ENCODE measurements at regions of chr1 and their contacts with region 1.

Region 1: DNA sequence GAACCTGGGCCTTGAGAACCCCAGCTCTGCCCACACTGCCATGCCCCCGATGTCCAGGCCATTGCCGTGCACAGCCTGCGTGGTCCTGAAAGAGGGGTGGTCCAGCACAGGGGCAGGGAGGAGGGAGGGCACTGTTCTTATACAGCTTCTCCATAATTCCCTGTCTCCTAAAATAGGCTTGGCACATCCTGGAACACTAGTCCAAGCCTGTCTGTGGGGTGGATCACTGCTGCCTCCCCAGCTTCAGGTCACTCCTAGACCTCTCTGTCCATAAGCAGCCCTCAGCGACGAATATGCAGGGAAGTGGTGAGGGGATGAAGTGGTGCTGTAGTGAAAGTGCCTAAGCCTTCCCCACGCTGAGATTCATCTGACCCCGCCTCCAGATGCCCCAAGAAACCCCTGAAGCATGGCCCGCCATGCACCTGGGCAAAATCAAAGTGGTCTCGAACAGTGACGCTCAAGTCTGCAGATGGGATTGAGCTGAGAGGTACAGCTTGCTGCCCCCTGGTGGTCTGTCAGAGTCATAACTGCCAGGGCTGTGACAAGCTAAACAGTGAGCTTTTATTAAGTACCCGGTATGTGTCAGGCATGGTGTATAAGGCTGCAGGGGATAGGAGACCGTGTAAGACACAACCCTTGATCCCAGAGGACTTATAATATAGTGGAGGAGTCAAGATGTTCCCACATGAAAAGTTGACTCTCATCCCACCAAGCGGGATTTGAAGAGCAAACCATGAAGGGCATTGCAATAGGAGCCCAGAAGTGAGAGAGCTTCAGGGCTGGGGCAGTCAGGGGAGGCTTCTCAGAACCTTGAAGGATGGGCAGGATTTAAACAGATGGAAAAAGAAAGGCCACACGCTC is 66.6 kb downstream of the FAM163A start:
- DNase-seq: peak; percentile 61
- ATAC-seq: peak; percentile 83
- H3K4me3 ChIP-seq: no peak overlapping the region
- H3K27ac ChIP-seq: no peak overlapping the region
- H3K4me1 ChIP-seq: peaks cover 4% of the 10 kb centered on the region; the same call in 1 of the 2 replicates
- H3K27me3 ChIP-seq: 0 out of 2 replicates have a peak, but pooled peaks cover 2% of the 10 kb centered on the region
- CTCF ChIP-seq: peak; percentile 94

Region 2: DNA sequence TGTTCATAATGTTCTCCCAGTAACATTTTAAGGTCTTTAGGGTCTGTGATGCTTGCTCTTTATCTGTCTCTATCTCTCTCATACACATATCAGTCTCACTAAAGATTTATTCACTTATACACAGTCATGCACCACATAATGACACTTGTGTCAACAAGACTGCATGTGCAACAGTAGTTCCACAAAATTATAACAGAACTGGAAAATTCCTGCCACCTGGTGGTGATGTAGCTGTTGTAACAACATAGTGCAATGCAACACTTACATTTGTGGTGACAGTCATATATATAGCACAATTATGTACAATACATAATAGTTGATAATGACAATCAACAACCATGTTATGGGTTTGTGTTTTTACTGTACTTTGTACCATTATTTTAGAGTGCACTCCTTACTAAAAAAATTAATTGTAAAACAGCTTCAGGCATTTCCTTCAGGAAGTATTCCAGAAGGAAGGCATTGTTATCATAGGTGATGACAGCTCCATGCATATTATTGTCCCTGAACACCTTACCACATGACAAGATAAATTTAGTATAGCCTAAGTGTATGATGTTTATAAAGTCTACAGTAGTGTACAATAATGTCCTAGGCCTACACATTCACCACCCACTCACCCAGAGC is 210.0 kb before region 1 on chr1:
- CTCF ChIA-PET with region 1: interaction called, 3 read pairs
- POLR2A ChIA-PET with region 1: no interaction called
- in situ Hi-C with region 1: no loop called
- intact Hi-C with region 1: loop called (anchors 10 kb)
- DNase-seq: no peak
- ATAC-seq: peak; percentile 90
- H3K4me3 ChIP-seq: no peak overlapping the region
- H3K27ac ChIP-seq: no peak overlapping the region
- H3K4me1 ChIP-seq: no peaks in the 10 kb centered on the region
- H3K27me3 ChIP-seq: no peaks in the 10 kb centered on the region
- CTCF ChIP-seq: peak; percentile 55; the same call in 1 of the 2 replicates

Region 3: DNA sequence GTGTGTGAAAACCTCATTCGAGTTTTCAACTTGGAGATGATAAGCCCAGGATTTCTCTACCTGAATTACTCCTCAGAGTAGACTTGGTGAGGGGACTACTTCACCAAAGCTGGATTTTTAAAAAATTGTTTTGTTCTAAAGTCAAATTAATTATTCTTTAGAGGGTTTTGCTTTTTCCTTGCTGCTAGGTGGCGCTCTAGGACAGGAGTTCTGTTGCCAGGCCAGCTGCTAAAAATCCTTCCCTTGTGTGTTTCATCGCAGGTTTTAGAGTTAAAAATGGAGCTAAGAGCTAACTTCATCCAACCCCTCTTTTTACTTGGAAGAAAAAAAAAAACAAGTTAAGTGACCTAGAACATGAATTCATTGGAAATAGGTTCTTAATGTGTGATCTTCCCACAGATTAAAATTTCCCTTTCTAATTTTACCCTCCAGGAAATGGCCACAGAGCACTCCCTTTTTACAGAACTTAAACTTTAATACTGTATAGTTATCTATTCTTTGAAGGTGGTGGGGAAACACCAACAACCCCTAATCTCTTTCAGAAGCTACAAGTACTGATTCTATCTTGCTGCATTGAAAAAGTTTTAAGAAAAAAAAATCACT is 103.3 kb before region 1 on chr1:
- CTCF ChIA-PET with region 1: interaction called, 76 read pairs
- POLR2A ChIA-PET with region 1: interaction called, 9 read pairs
- in situ Hi-C with region 1: no loop called
- intact Hi-C with region 1: loop called (anchors 1 kb)
- DNase-seq: no peak
- ATAC-seq: no peak
- H3K4me3 ChIP-seq: no peak overlapping the region
- H3K27ac ChIP-seq: no peak overlapping the region
- H3K4me1 ChIP-seq: no peaks in the 10 kb centered on the region
- H3K27me3 ChIP-seq: peaks cover 9% of the 10 kb centered on the region; the same call in 1 of the 2 replicates
- CTCF ChIP-seq: peak; percentile 84

Region 4: GRCh38 chr1:179770884-179771502 is 38.7 kb before region 1 on chr1:
- CTCF ChIA-PET with region 1: interaction called, 11 read pairs
- POLR2A ChIA-PET with region 1: no interaction called
- in situ Hi-C with region 1: no loop called
- intact Hi-C with region 1: no loop called
- DNase-seq: no peak
- ATAC-seq: peak; percentile 68
- H3K4me3 ChIP-seq: no peak overlapping the region
- H3K27ac ChIP-seq: no peak overlapping the region
- H3K4me1 ChIP-seq: no peaks in the 10 kb centered on the region
- H3K27me3 ChIP-seq: no peaks in the 10 kb centered on the region
- CTCF ChIP-seq: peak; percentile 46

Region 5: DNA sequence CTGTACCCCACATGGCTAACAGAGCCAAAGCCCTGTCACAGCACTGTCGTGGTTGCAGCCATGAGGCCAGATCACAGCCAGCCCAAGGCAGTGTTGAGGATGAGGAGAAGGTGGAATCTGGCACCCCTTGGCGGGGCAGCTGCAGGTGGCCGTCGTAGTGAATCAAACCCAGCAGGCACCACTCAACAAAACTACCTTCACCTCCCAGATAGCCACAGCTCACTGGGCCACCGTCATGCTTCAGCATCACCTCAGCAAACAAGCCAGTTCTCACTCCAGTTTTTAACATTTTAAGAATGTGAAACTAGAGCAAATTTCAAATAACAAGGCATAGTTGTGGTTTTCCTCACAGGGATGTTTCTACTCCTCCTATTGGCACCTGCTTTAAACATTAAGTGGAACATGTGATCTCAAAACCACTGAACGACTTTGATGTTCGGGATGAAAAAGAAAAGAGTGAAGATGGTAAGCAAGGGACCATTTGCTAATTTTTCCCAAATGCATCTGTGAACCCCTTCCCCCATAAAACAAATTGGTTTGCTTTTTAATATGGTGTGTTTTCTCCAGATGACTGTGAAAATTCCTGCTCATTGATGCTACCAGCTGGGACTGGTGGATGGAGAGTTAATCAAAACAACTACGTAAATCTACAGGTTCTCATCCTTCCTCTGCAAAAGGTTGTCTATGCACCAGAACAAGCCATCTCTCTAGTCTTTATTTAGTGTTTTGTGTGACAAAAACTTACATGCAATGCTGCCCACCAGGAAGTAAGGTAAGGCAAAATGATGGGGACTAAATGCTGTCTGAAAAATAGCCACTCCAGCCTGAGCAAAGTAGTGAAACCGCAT is 22.3 kb after region 1 on chr1:
- CTCF ChIA-PET with region 1: interaction called, 19 read pairs
- POLR2A ChIA-PET with region 1: no interaction called
- in situ Hi-C with region 1: no loop called
- intact Hi-C with region 1: no loop called
- DNase-seq: no peak
- ATAC-seq: peak; percentile 47
- H3K4me3 ChIP-seq: no peak overlapping the region
- H3K27ac ChIP-seq: no peak overlapping the region
- H3K4me1 ChIP-seq: no peaks in the 10 kb centered on the region
- H3K27me3 ChIP-seq: 0 out of 2 replicates have a peak, but pooled peaks cover 2% of the 10 kb centered on the region
- CTCF ChIP-seq: no peak

Region 6: DNA sequence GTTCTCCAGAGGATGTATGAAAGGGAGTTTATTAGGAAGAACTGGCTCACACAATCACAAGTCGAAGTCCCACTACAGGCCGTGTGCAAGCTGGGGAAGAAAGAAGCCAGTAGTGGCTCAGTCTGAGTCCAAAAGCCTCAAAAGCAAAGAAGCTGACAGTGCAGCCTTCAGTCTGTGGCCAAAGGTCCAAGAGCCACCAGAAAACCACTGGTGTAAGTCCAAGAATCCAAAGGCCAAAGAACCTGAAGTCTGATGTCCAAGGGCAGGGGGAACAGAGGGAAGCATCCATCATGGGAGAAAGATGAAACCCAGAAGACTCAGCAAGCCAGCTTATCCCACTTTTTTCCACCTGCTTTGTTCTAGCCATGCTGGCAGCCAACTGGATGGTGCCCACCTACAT is 123.5 kb after region 1 on chr1:
- CTCF ChIA-PET with region 1: interaction called, 11 read pairs
- POLR2A ChIA-PET with region 1: no interaction called
- in situ Hi-C with region 1: no loop called
- intact Hi-C with region 1: no loop called
- DNase-seq: no peak
- ATAC-seq: no peak
- H3K4me3 ChIP-seq: no peak overlapping the region
- H3K27ac ChIP-seq: peak overlapping the region; percentile 42; the same call in 1 of the 2 replicates
- H3K4me1 ChIP-seq: peaks cover 22% of the 10 kb centered on the region; the same call in 1 of the 2 replicates
- H3K27me3 ChIP-seq: no peaks in the 10 kb centered on the region
- CTCF ChIP-seq: no peak

Region 7: GRCh38 chr1:179973198-179974110 is 163.7 kb after region 1 on chr1:
- CTCF ChIA-PET with region 1: no interaction called
- POLR2A ChIA-PET with region 1: no interaction called
- in situ Hi-C with region 1: no loop called
- intact Hi-C with region 1: no loop called
- DNase-seq: no peak
- ATAC-seq: no peak
- H3K4me3 ChIP-seq: no peak overlapping the region
- H3K27ac ChIP-seq: no peak overlapping the region
- H3K4me1 ChIP-seq: 0 out of 2 replicates have a peak, but pooled peaks cover 5% of the 10 kb centered on the region
- H3K27me3 ChIP-seq: no peaks in the 10 kb centered on the region
- CTCF ChIP-seq: no peak

Region 8: GRCh38 chr1:180188091-180188506 is 378.4 kb after region 1 on chr1:
- CTCF ChIA-PET with region 1: interaction called, 16 read pairs
- POLR2A ChIA-PET with region 1: no interaction called
- in situ Hi-C with region 1: no loop called
- intact Hi-C with region 1: no loop called
- DNase-seq: peak; percentile 15
- ATAC-seq: peak; percentile 95
- H3K4me3 ChIP-seq: no peak overlapping the region
- H3K27ac ChIP-seq: no peak overlapping the region
- H3K4me1 ChIP-seq: no peaks in the 10 kb centered on the region
- H3K27me3 ChIP-seq: no peaks in the 10 kb centered on the region
- CTCF ChIP-seq: peak; percentile 94

Measured in Panc1 (cell line).